Common myeloid progenitor, CD34-positive (primary cell): ENCODE measurements at regions of chr4 and their contacts with region 1.

Region 1: GRCh38 chr4:54036184-54036583 is 28.2 kb downstream of the CHIC2 start:
- DNase-seq: no peak
- H3K4me3 ChIP-seq: no peak overlapping the region
- H3K27ac ChIP-seq: no peak overlapping the region
- H3K4me1 ChIP-seq: peaks cover 0 to 4% (median 2%) of the 10 kb centered on the region in 4 experiments
- H3K27me3 ChIP-seq: no peaks in the 10 kb centered on the region

Region 2: DNA sequence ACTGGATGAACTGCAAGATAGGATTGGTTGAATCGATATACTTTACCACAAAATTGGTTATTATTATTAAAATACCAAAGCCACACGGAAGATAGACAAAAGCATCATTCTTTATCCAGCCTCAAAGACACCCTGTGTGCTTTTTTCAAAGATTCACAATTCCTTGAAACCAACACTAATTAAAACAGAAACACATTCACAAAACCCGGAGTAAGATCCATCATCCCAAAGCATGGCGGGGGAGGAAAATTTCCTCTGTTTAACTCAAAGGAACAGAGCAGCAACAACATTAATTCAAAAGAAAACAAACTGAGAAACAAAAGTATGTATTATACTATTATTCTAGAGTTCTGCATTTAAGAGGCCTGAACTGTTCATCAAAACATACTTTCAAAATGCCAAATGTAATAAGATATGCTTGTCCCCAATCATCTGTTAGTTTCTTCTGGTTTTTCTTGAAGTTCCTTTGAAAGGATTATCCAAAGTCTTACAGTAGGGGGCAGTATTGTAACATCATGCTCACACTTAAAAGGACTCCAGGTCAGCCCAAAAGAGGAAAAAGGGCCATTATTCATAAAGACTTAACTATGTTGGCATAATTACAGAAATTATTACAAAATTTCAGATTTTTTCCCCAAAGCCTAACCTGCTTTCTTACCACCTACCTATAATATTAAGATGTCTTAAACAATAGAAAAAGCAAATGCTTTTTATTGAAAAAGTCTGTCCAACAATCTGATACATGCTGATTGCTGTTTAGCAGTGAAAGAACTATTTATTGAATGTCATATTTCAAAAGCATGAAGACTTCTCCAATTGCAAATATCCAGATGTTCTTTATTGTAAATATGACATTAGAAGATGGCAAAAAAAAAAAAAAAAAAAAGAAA is 839.1 kb before region 1 on chr4:
- CTCF ChIA-PET with region 1: no interaction called
- POLR2A ChIA-PET with region 1: no interaction called
- DNase-seq: peak; percentile 83 to 91 (median 88)
- H3K4me3 ChIP-seq: peak overlapping the region in 2 of 7 experiments; percentile 64 to 70
- H3K27ac ChIP-seq: no peak overlapping the region
- H3K4me1 ChIP-seq: peaks cover 0 to 18% (median 3%) of the 10 kb centered on the region in 4 experiments
- H3K27me3 ChIP-seq: no peaks in the 10 kb centered on the region

Region 3: DNA sequence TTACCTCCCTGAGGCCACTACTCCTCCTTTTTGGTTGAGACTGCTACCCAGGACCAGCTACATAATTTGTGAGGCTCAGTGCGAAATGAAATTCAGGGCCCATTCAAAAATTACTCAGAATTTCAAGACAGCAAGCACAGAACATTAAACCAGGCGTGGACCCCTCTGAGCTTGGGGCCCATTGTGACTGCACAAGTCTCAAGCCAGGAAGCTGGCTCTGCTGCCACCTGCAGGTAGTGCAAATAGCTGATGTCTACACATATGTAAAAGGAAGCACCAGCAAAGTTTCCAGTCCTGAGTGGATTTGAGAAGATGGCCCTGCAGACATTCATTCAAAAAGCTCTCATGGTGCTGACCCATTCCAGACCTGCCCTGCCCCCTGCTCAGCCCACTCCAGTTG is 231.5 kb before region 1 on chr4:
- CTCF ChIA-PET with region 1: no interaction called
- POLR2A ChIA-PET with region 1: no interaction called
- DNase-seq: peak; percentile 49 to 81 (median 69)
- H3K4me3 ChIP-seq: no peak overlapping the region
- H3K27ac ChIP-seq: no peak overlapping the region
- H3K4me1 ChIP-seq: no peaks in the 10 kb centered on the region
- H3K27me3 ChIP-seq: peaks cover 0 to 2% (median 0%) of the 10 kb centered on the region in 5 experiments

Region 4: GRCh38 chr4:53886090-53886489 is 150.1 kb before region 1 on chr4:
- CTCF ChIA-PET with region 1: no interaction called
- POLR2A ChIA-PET with region 1: no interaction called
- DNase-seq: no peak
- H3K4me3 ChIP-seq: no peak overlapping the region
- H3K27ac ChIP-seq: no peak overlapping the region
- H3K4me1 ChIP-seq: no peaks in the 10 kb centered on the region
- H3K27me3 ChIP-seq: peaks cover 0 to 2% (median 0%) of the 10 kb centered on the region in 5 experiments

Region 5: DNA sequence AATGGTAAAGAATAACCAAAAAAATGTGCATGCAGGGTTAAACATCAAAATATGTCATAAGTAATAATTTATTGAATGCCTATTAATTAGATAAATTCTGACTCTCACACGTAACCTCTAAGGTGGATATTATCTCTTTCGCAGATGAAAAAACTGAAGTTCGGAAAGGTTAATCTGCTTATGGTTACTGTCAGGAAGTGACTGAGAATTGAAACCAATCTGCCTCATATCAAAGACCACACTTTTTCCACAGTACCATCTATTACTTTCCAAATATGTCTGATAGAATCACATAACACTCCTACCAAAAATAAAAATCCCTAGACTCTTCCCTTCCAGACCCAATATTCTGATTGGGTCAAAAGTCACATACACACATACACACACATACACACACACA is 22.0 kb after region 1 on chr4:
- CTCF ChIA-PET with region 1: interaction called, 10 read pairs
- POLR2A ChIA-PET with region 1: no interaction called
- DNase-seq: peak in 2 of 3 donors; percentile 31 to 44
- H3K4me3 ChIP-seq: peak overlapping the region in 2 of 7 experiments; percentile 29 to 48
- H3K27ac ChIP-seq: no peak overlapping the region
- H3K4me1 ChIP-seq: peaks cover 19 to 49% (median 30%) of the 10 kb centered on the region in 4 experiments
- H3K27me3 ChIP-seq: no peaks in the 10 kb centered on the region